Gastrocnemius medialis (tissue), 4 donors: ENCODE measurements at regions of chr12 and their contacts with region 1.

Region 1: DNA sequence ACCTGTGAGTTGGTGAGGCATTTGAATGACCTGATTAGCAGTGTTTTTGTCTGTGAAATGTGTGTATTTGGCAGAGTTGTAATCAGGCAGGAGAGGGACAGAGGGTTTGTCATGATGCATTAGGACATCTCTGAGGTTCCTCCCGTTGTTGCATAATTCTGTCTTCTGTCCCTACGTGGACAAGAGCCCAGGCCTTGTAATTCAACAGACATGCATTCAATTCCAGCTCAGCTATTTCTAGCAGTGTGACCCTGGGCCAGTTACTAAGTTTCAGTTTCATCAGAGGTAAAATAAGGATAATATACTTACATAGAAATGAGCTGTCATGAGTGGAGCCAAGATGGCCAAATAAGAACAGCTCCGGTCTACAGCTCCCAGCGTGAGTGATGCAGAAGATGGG is 208.6 kb downstream of the SLC38A4 start:
- DNase-seq: peak; percentile 86 to 92
- ATAC-seq: peak; percentile 100
- H3K4me3 ChIP-seq: peak overlapping the region; percentile 19 to 38 (median 34)
- H3K27ac ChIP-seq: peak overlapping the region; percentile 77 to 87 (median 80)
- H3K4me1 ChIP-seq: peaks cover 11 to 12% of the 10 kb centered on the region in 2 donors
- H3K27me3 ChIP-seq: no peaks in the 10 kb centered on the region
- CTCF ChIP-seq: no peak
- POLR2A ChIP-seq: no peak

Region 2: DNA sequence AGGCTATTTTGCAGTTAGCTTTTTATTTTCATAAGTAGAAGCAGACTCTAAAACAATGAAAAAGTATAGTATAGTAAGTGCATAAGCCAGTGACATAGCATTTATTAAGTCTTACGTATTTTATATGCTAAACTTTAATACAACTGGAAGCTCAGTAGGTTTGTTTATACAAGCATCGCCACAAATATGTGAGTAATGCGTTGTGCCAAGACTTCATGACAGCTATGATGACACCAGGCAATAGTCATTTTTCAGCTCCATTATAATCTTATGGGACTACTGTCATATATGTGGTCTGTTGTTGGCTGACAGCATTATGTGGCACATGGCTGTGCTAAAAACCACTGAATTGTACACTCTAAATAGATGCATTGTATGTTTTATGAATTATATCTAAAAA is 284.9 kb before region 1 on chr12:
- in situ Hi-C with region 1: no loop called
- intact Hi-C with region 1: no loop called
- DNase-seq: no peak
- ATAC-seq: no peak
- H3K4me3 ChIP-seq: no peak overlapping the region
- H3K27ac ChIP-seq: no peak overlapping the region
- H3K4me1 ChIP-seq: no peaks in the 10 kb centered on the region
- H3K27me3 ChIP-seq: no peaks in the 10 kb centered on the region
- CTCF ChIP-seq: no peak
- POLR2A ChIP-seq: no peak

Region 3: GRCh38 chr12:46364777-46365580 is 252.2 kb before region 1 on chr12:
- in situ Hi-C with region 1: no loop called
- intact Hi-C with region 1: loop called (anchors 5 kb)
- DNase-seq: peak; percentile 35 to 38
- ATAC-seq: no peak
- H3K4me3 ChIP-seq: peak overlapping the region in 3 of 4 donors; percentile 9 to 87 (median 68)
- H3K27ac ChIP-seq: peak overlapping the region; percentile 93 to 97 (median 95)
- H3K4me1 ChIP-seq: peaks cover 85 to 88% of the 10 kb centered on the region in 2 donors
- H3K27me3 ChIP-seq: no peaks in the 10 kb centered on the region
- CTCF ChIP-seq: no peak
- POLR2A ChIP-seq: no peak

Region 4: GRCh38 chr12:46468159-46468558 is 149.0 kb before region 1 on chr12:
- in situ Hi-C with region 1: no loop called
- intact Hi-C with region 1: loop called (anchors 5 kb)
- DNase-seq: peak; percentile 57 to 84
- ATAC-seq: peak; percentile 90 to 97
- H3K4me3 ChIP-seq: no peak overlapping the region
- H3K27ac ChIP-seq: peak overlapping the region; percentile 75 to 83 (median 81)
- H3K4me1 ChIP-seq: peaks cover 54 to 56% of the 10 kb centered on the region in 2 donors
- H3K27me3 ChIP-seq: no peaks in the 10 kb centered on the region
- CTCF ChIP-seq: peak in 2 of 5 experiments; percentile 6 to 18
- POLR2A ChIP-seq: peak in 1 of 2 donors; percentile 46

Region 5: DNA sequence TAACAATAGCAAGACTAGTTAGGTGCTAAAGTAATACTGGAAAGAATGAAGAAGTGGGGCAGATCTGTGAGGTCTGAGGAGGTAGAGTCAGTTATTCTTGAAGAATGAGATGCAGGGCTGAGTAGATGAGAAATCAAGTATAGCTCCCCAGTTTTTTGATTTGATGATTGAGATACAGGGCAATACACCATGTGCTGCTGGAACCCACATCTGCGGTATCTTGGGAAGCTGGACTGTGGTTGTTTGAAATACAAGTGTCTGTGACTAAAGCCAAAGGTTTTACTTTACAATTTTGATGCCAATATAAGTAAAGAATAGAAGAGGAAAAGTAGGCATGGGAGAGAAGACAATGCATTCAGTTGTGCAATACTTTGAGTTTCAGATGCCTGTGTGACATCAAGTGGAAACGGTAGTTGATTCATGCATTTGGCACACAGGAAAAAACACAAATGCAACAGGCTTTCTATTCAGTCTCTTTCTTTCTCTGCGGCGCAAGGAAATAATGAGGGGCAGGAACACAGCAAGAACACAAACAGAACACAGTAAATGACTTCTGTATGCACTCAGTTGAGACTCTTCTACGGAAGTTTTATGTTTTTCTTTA is 54.4 kb before region 1 on chr12:
- in situ Hi-C with region 1: loop called in 1 of 4 experiments (anchors 10 kb)
- intact Hi-C with region 1: loop called (anchors 1 kb)
- DNase-seq: no peak
- ATAC-seq: peak; percentile 62 to 67
- H3K4me3 ChIP-seq: peak overlapping the region in 2 of 4 donors; percentile 3 to 12
- H3K27ac ChIP-seq: peak overlapping the region; percentile 68 to 90 (median 80)
- H3K4me1 ChIP-seq: peaks cover 40 to 47% of the 10 kb centered on the region in 2 donors
- H3K27me3 ChIP-seq: no peaks in the 10 kb centered on the region
- CTCF ChIP-seq: no peak
- POLR2A ChIP-seq: no peak

Region 6: DNA sequence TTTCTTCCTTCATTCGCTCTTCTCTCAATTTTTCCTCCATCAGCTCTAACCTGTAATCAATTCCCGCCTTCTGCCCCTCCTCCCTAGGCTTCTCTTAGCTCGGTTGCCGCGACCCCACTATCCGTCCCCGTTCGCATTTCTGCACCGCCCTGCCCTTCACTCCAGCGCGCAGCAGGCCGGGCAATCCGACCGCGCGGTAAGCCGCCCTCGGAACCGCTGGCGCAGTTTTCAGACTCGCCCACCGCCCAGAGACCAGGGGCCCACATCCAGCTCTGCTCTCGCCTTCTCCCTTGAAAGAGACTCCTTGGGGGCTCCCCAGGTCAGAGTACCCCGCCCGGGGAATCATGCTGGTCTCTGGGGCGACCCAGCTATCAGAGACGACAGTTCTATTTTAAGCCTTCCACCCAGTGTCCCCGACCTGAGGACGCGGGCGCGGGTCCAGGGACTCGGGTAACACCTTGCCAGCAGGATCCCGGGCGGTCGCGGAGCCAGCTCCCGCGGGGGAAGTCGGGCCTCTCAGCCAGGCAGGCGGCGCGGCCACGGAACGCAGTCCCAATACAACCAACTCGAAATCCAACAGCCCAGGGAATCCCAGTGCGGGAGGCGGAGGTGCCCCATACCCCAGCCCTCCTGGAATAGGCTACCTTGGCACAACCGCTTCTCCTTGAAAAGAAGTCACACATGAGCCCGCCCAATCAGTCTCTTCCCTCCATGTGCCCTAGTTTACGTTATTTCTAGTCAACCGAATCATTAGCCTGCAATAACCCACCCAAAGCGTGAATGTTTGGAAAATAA is 214.4 kb after region 1 on chr12:
- in situ Hi-C with region 1: no loop called
- intact Hi-C with region 1: no loop called
- DNase-seq: peak; percentile 70 to 88
- ATAC-seq: peak; percentile 84 to 88
- H3K4me3 ChIP-seq: peak overlapping the region; percentile 63 to 75 (median 70)
- H3K27ac ChIP-seq: peak overlapping the region; percentile 88 to 95 (median 92)
- H3K4me1 ChIP-seq: peaks cover 9 to 13% of the 10 kb centered on the region in 2 donors
- H3K27me3 ChIP-seq: no peaks in the 10 kb centered on the region
- CTCF ChIP-seq: no peak
- POLR2A ChIP-seq: peak in 1 of 2 donors; percentile 71